CD8-positive, alpha-beta T cell (primary cell): ENCODE measurements at regions of chr9 and their contacts with region 1.

Region 1: DNA sequence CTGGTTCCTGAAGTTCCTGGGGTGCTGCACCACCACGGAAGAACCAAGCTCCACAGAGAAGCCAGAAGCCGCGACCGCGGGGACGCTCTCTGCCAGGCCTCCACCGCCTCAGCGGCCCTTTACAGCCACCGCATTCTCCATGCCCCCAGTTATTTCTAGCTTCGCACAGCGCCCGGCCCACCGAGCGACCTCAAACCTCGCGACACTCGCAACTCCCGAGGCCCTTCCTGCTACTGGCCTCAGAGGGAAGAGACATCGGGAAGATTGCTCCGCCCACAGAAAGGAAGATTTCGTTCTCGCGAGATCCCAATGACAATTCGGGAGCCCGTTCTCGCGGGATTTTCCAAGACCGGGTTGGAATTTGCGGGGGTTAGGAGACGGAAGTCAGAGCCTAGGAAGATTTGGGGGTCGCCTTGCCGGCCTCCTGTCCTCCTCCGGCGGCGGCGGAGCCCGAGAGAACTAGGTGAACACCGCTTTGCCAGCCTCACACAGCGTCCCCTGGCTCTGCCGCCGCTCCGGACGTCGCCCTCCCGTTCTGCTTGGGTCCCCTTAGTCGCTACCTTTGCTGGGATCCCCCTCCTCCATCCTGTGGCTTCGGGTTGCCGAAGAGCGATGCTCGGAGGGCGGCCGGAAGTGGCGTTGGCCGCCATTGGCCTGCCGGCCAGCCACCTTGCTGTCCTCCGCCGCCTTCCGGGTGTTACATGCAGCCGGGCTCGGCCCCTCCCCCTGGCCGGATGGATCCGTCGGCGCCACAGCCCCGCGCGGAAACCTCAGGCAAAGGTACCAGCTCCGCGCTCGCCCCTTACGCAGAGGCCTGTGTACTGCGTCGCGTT is at the start of gene ERCC6L2:
- DNase-seq: peak; percentile 86 to 97 (median 92)
- ATAC-seq: peak; percentile 73
- H3K4me3 ChIP-seq: no peak within 1 kb of the TSS
- H3K4me3 Mint-ChIP-seq: no peak within 1 kb of the TSS
- H3K27ac ChIP-seq: no peak within 1 kb of the TSS
- H3K27ac Mint-ChIP-seq: no peak within 1 kb of the TSS
- H3K4me1 ChIP-seq: peaks cover 25% of the 10 kb centered on the region
- H3K4me1 Mint-ChIP-seq: peaks cover 38% of the 10 kb centered on the region
- H3K27me3 ChIP-seq: no peaks in the 10 kb centered on the region
- H3K27me3 Mint-ChIP-seq: no peaks in the 10 kb centered on the region
- CTCF ChIP-seq: no peak
- total RNA-seq, gene ERCC6L2: 32.9 to 33.4 TPM

Region 2: DNA sequence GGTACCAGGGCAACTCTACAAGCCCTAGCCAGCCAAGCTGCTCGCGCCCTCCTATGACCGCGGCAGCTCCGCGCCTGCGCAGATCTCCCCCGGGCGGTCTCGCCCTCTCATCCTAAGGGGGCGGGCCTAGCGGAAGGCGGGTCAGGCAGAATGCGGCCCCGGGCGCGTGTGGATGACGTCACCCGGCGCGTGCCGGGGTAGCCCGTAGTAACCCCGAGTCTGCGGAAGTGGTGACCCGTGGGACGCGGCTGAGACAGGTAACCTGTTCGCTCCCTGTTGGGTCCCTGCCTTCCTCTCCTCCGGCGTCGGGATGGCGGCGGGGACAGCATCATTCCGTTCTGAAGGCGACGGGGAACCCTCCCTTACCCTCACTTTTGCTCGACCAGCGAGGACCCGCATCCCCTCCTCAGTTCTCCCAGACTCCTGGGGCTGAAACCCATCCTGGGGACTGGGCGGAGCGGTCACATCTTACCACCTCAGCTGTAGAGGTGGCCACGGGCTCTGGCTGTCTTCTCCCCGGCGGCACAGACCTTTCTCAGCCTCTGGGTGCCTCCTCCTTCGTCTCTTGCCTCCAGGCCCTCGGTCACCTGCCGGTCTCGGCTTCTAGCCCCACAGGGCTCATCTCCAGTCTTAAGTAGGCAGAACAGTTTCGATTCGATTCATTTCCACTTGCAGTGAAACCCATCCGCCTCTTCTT is 1148.9 kb before region 1 on chr9 and contains the start of gene AOPEP:
- CTCF ChIA-PET with region 1: no interaction called
- POLR2A ChIA-PET with region 1: no interaction called
- intact Hi-C with region 1: loop called in 1 of 2 experiments (anchors 5 kb)
- DNase-seq: peak; percentile 98 to 100 (median 99)
- ATAC-seq: peak; percentile 95
- H3K4me3 ChIP-seq: peak within 1 kb of the TSS; percentile 88 to 92
- H3K4me3 Mint-ChIP-seq: peak within 1 kb of the TSS; percentile 99
- H3K27ac ChIP-seq: peak within 1 kb of the TSS; percentile 95 to 96
- H3K27ac Mint-ChIP-seq: peak within 1 kb of the TSS; percentile 98
- H3K4me1 ChIP-seq: peaks cover 6% of the 10 kb centered on the region
- H3K4me1 Mint-ChIP-seq: peaks cover 12% of the 10 kb centered on the region
- H3K27me3 ChIP-seq: no peaks in the 10 kb centered on the region
- H3K27me3 Mint-ChIP-seq: no peaks in the 10 kb centered on the region
- CTCF ChIP-seq: no peak
- total RNA-seq, gene AOPEP: 4.5 to 5.2 TPM

Region 3: DNA sequence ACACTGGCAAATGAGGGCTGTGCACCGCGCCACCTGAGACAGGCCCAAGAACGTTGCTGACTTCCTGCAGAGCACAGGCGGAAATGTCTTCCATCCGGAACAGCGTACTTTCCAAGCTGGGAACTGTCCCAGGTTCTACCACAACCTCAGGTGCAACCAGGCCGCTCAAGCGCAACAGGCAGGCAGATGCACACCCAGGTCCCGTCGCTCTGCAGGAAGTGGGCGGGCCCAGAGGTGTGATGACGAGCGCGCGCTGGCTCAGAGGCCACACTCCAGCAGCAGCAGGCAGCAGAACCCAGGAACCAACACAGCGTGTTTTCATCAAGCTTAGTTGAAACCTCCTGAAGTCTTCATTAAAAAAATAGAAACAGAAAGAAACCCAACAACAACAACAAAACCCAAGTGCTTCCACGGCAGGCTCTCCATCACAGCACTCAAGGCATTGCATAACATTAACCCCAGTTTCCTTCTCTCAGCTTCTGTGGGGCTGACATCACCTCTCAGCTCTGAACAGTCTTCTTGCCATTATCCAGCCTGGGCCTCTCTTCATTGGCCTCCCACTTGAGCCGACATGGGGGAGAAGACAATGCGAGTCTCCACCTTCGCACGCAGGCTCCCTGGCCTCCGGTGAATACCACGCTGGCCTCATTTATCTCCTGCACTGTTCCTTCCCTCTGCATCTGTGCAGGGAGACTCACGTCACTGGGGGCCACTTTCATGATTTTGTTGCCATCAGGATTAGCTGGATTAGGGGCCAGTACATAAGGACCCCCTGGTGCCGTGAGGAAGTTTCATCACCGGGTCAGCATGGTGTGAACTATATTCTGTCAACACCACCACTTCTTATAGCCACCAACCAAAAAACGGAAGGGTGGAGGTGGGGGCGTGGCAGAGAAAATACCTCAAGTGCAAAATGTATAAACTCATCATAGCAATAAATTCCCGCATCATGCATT is 380.8 kb before region 1 on chr9:
- CTCF ChIA-PET with region 1: no interaction called
- POLR2A ChIA-PET with region 1: no interaction called
- intact Hi-C with region 1: loop called in 1 of 2 experiments (anchors 1 kb)
- DNase-seq: peak; percentile 71 to 95 (median 88)
- ATAC-seq: peak; percentile 95
- H3K4me3 ChIP-seq: peak overlapping the region; percentile 28 to 38
- H3K4me3 Mint-ChIP-seq: peak overlapping the region; percentile 83
- H3K27ac ChIP-seq: peak overlapping the region; percentile 69
- H3K27ac Mint-ChIP-seq: peak overlapping the region; percentile 96
- H3K4me1 ChIP-seq: peaks cover 81% of the 10 kb centered on the region
- H3K4me1 Mint-ChIP-seq: peaks cover 78% of the 10 kb centered on the region
- H3K27me3 ChIP-seq: no peaks in the 10 kb centered on the region
- H3K27me3 Mint-ChIP-seq: peaks cover 6% of the 10 kb centered on the region
- CTCF ChIP-seq: no peak

Region 4: GRCh38 chr9:95726756-95727155 is 148.8 kb before region 1 on chr9:
- CTCF ChIA-PET with region 1: no interaction called
- POLR2A ChIA-PET with region 1: no interaction called
- intact Hi-C with region 1: loop called in 1 of 2 experiments (anchors 1 kb)
- DNase-seq: peak in 2 of 9 experiments; percentile 39 to 55
- ATAC-seq: no peak
- H3K4me3 ChIP-seq: no peak overlapping the region
- H3K4me3 Mint-ChIP-seq: no peak overlapping the region
- H3K27ac ChIP-seq: no peak overlapping the region
- H3K27ac Mint-ChIP-seq: no peak overlapping the region
- H3K4me1 ChIP-seq: peaks cover 28% of the 10 kb centered on the region
- H3K4me1 Mint-ChIP-seq: peaks cover 47% of the 10 kb centered on the region
- H3K27me3 ChIP-seq: no peaks in the 10 kb centered on the region
- H3K27me3 Mint-ChIP-seq: peaks cover 2% of the 10 kb centered on the region
- CTCF ChIP-seq: peak; percentile 46

Region 5: DNA sequence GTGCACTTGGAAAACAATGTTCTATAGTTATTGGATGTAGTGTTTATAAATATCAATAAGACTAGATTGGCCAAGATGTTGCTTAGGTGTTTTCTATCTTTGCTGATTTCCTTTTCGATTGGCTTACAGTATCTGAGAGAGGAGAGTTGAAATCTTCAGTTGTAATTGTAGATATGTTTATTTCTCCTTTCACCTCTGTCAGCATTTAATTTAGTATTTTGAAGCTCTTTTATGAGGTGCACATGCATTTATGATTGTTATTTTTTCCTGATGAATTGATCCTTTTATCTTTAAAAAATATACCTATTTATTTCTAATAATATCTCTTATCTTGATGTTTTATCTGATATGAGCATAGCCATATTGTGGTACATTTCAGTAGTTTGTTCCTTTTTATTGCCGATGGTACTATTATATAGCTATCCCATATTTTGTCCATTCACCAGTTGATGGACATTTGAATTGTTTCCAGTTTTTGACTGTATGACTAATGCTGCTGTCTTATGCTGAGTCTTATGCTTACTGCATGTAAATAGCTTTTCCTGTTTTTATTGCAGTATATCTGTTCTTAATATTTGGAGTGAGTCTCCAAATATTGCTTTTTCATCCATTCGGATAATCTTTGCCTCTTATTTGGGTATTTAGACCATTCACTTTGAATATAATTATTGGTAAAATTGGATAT is 34.6 kb after region 1 on chr9:
- CTCF ChIA-PET with region 1: interaction called, 6 read pairs
- POLR2A ChIA-PET with region 1: interaction called, 4 read pairs
- intact Hi-C with region 1: loop called in 1 of 2 experiments (anchors 5 kb)
- DNase-seq: no peak
- ATAC-seq: no peak
- H3K4me3 ChIP-seq: no peak overlapping the region
- H3K4me3 Mint-ChIP-seq: no peak overlapping the region
- H3K27ac ChIP-seq: no peak overlapping the region
- H3K27ac Mint-ChIP-seq: no peak overlapping the region
- H3K4me1 ChIP-seq: no peaks in the 10 kb centered on the region
- H3K4me1 Mint-ChIP-seq: peaks cover 49% of the 10 kb centered on the region
- H3K27me3 ChIP-seq: no peaks in the 10 kb centered on the region
- H3K27me3 Mint-ChIP-seq: no peaks in the 10 kb centered on the region
- CTCF ChIP-seq: no peak

Region 6: GRCh38 chr9:96418074-96418809 is 542.7 kb after region 1 on chr9 and contains the start of gene ZNF367:
- CTCF ChIA-PET with region 1: no interaction called
- POLR2A ChIA-PET with region 1: no interaction called
- intact Hi-C with region 1: loop called in 1 of 2 experiments (anchors 10 kb)
- DNase-seq: peak; percentile 80 to 95 (median 90)
- ATAC-seq: peak; percentile 71
- H3K4me3 ChIP-seq: peak within 1 kb of the TSS; percentile 93 to 96
- H3K4me3 Mint-ChIP-seq: peak within 1 kb of the TSS; percentile 90
- H3K27ac ChIP-seq: peak within 1 kb of the TSS; percentile 88 to 91
- H3K27ac Mint-ChIP-seq: peak within 1 kb of the TSS; percentile 94
- H3K4me1 ChIP-seq: peaks cover 36% of the 10 kb centered on the region
- H3K4me1 Mint-ChIP-seq: peaks cover 33% of the 10 kb centered on the region
- H3K27me3 ChIP-seq: no peaks in the 10 kb centered on the region
- H3K27me3 Mint-ChIP-seq: no peaks in the 10 kb centered on the region
- CTCF ChIP-seq: no peak
- total RNA-seq, gene ZNF367: 6.1 to 6.4 TPM

Region 7: DNA sequence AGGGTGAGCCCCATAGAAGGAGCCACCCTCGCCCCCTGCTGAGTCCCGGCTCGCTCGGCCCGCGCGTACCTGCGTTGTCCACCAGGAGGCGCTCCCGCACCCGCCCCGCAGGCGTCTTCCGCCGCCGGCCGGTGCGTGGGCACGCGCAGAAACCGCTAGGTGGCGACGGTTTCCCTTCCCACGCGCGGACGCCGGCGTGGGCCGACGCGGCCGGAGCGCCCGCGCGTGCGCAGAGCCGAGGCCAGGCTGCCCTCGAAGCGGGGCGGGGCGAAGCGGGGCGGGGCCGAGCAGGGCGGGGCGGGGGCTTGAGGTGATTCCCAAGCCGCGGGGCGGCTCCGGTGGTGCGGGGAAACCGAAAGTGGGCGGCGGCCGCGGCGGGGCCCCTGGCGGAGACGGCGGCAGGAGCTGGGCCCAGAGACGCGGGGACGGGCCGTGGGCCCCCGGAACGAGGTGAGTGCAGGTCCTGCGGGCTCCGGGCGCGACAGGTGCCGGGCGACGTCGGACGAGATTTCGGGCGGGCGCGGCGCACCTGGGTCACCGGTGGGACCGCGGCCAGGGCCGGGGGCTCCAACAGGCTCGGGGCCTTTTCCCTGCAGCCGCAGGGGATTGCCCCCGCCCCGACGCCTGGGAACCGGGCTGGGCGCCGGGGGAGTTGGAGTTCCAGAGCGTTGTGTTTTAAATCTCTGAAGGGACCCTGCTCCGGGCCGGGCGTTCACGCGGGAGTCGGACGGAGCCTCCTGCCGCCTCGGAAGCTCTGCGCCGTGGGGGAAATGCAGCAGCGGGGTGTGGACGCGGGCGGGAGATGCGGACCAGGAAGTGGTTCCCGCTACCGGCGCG is 1536.5 kb after region 1 on chr9 and contains the start of gene TDRD7:
- CTCF ChIA-PET with region 1: no interaction called
- POLR2A ChIA-PET with region 1: no interaction called
- intact Hi-C with region 1: loop called in 1 of 2 experiments (anchors 10 kb)
- DNase-seq: peak; percentile 86 to 97 (median 92)
- ATAC-seq: peak; percentile 88
- H3K4me3 ChIP-seq: peak within 1 kb of the TSS; percentile 62 to 77
- H3K4me3 Mint-ChIP-seq: peak within 1 kb of the TSS; percentile 86
- H3K27ac ChIP-seq: peak within 1 kb of the TSS; percentile 56 to 79
- H3K27ac Mint-ChIP-seq: peak within 1 kb of the TSS; percentile 85
- H3K4me1 ChIP-seq: peaks cover 13% of the 10 kb centered on the region
- H3K4me1 Mint-ChIP-seq: peaks cover 27% of the 10 kb centered on the region
- H3K27me3 ChIP-seq: no peaks in the 10 kb centered on the region
- H3K27me3 Mint-ChIP-seq: peaks cover 14% of the 10 kb centered on the region
- CTCF ChIP-seq: peak; percentile 96
- total RNA-seq, gene TDRD7: 3.5 to 4.5 TPM